Upper lobe of right lung (tissue), 1 donor: ENCODE measurements at regions of chr1 and their contacts with region 1.

Region 1: DNA sequence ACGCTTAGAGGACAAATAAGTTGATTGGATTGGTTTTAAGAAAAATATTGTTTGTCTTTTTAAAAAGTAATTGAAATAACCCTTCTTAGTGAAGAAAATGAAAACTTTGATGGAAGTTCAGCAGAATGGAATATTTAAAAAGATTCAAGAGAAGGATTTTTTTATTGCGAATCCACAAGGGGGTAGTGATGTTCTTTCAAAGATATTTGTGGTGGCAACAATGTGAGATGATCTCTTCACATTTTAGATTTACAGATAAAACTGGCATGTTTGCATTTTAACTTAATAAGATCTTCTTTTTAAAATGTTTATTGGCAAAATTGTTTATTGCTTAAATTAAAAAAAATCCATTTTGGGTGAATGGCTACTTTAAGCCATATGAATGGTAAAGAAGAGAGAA is 8.9 kb downstream of the CAMTA1 start:
- DNase-seq: no peak
- ATAC-seq: no peak
- H3K4me3 ChIP-seq: no peak overlapping the region
- H3K27ac ChIP-seq: no peak overlapping the region
- H3K4me1 ChIP-seq: peaks cover 13% of the 10 kb centered on the region
- H3K27me3 ChIP-seq: no peaks in the 10 kb centered on the region
- CTCF ChIP-seq: peak; percentile 50

Region 2: GRCh38 chr1:7070389-7071029 is 276.3 kb after region 1 on chr1:
- intact Hi-C with region 1: loop called (anchors 10 kb)
- DNase-seq: no peak
- ATAC-seq: peak; percentile 85
- H3K4me3 ChIP-seq: peak overlapping the region; percentile 35
- H3K27ac ChIP-seq: no peak overlapping the region
- H3K4me1 ChIP-seq: peaks cover 5% of the 10 kb centered on the region
- H3K27me3 ChIP-seq: peaks cover 11% of the 10 kb centered on the region
- CTCF ChIP-seq: peak; percentile 83

Region 3: DNA sequence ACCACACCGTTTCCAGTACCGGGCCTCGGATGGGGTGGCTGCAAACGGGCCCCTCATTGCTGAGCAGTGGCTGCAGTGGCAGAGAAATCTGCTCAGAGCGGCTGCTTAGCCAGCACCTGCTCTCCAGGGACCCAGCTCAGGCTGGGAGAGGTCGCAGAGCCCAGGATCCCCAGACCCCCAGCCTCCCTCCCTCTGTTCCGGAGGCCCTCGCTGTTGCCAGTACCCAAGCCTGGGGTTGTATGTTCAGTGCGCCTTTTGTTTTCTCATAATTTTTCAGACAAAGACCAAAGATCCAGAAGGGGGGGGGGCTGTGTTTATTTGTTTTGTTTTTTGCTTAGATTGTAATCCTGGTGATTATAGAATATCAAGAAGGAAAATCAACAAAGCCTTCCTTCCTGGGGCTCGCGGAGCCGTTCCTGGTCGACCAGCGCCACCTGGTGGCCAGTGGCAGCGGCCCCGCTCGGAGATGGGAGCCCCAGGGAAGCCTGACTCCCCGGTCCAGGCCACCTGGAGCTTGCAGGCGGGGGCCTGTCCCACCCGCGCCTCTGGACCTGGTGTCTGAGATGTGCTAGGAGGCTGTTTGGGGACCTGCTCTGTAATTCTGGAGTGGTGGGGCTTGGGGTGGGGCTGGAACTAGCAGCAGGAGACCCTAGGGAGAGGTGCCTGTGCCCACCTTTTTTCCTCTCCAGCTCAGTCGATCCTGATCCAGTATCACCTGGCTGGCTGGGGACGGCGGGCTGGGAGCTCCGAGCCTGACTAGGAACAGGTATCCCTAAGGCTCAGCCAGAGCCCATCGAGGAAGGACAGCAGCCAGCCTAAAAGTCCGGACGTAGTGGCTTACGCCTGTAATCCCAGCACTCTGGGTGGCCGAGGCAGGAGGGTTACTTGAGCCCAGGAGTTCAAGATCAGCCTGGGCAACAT is 853.1 kb after region 1 on chr1:
- intact Hi-C with region 1: loop called (anchors 5 kb)
- DNase-seq: peak; percentile 90
- ATAC-seq: peak; percentile 62
- H3K4me3 ChIP-seq: no peak overlapping the region
- H3K27ac ChIP-seq: no peak overlapping the region
- H3K4me1 ChIP-seq: peaks cover 26% of the 10 kb centered on the region
- H3K27me3 ChIP-seq: no peaks in the 10 kb centered on the region
- CTCF ChIP-seq: peak; percentile 94